HepG2 (cell line): ENCODE measurements at regions of chr5 and their contacts with region 1.

Region 1: DNA sequence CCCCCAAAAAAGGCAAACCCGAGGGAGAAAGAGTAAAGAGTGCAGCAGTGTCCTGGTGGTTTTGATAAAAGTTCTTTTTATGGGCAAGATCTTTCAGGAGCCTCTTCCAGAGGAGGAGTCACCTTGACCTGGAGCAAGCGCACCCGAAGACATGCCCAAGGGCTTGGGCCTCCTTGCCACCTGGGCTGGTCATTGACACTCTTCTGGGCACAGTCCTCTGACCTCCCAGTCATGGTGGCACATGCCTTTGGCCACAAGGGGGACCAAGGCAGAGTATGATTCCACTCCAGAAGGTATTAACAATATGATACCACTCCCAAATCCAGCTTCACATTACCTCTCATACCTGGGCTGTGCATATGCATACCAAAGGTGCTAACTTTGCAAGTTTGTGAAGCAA is 84.5 kb downstream of the MAST4 start:
- DNase-seq: no peak
- ATAC-seq: peak; percentile 41; the same call in 2 of the 3 replicates
- H3K4me3 ChIP-seq: no peak overlapping the region
- H3K27ac ChIP-seq: no peak overlapping the region
- H3K4me1 ChIP-seq: no peaks in the 10 kb centered on the region
- H3K27me3 ChIP-seq: no peaks in the 10 kb centered on the region
- CTCF ChIP-seq: peak; percentile 26; the same call in 1 of the 2 replicates
- EP300 ChIP-seq: no peak
- POLR2A ChIP-seq: no peak
- RAD21 ChIP-seq: no peak

Region 2: DNA sequence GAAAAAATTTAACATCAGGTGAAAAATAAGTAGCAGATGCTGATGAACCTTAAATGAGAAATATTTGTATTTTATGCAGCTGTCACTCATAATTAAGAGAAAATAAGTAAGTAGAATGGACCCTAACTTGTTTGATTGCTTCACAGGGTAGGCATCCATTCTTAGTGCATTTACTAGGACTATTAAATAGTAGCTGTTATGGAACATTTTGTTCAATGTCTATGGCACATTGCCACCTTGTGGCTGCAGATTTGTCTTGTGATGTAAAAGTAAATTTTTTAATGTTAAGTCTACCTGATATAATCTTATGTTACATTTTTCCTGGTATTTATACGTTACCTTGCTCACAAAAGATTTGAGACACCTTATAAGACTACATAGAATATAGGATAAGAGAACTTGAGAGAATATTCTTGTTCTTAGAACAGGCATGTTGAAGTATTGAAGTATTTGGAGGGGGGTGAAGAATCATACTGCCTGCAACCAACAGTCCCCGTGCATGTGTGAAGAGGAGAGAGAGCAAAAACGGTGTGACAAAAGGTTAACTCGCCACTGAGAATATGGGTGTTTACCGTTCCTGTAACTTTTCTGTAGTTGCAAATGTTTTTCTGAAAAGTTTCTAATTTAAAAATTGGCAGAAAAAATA is 76.6 kb after region 1 on chr5:
- CTCF ChIA-PET with region 1: no interaction called
- POLR2A ChIA-PET with region 1: no interaction called
- in situ Hi-C with region 1: no loop called
- intact Hi-C with region 1: loop called (anchors 2 kb)
- DNase-seq: peak; percentile 20
- ATAC-seq: no peak
- H3K4me3 ChIP-seq: no peak overlapping the region
- H3K27ac ChIP-seq: no peak overlapping the region
- H3K4me1 ChIP-seq: no peaks in the 10 kb centered on the region
- H3K27me3 ChIP-seq: peaks cover 0 to 7% of the 10 kb centered on the region in 2 experiments; a peak in 2 of 5 replicates
- CTCF ChIP-seq: peak; percentile 53
- EP300 ChIP-seq: no peak
- POLR2A ChIP-seq: no peak
- RAD21 ChIP-seq: no peak

Region 3: GRCh38 chr5:66807743-66808142 is 127.0 kb after region 1 on chr5:
- CTCF ChIA-PET with region 1: no interaction called
- POLR2A ChIA-PET with region 1: no interaction called
- in situ Hi-C with region 1: no loop called
- intact Hi-C with region 1: no loop called
- DNase-seq: peak; percentile 7
- ATAC-seq: 0 out of 3 replicates have a peak, but pooled peaks have one; percentile 31
- H3K4me3 ChIP-seq: no peak overlapping the region
- H3K27ac ChIP-seq: no peak overlapping the region
- H3K4me1 ChIP-seq: no peaks in the 10 kb centered on the region
- H3K27me3 ChIP-seq: peaks cover 2 to 4% of the 10 kb centered on the region in 2 experiments; a peak in 3 of 5 replicates
- CTCF ChIP-seq: peak; percentile 36
- EP300 ChIP-seq: no peak
- POLR2A ChIP-seq: no peak
- RAD21 ChIP-seq: no peak